B cell (primary cell): ENCODE measurements at regions of chr1 and their contacts with region 1.

Region 1: DNA sequence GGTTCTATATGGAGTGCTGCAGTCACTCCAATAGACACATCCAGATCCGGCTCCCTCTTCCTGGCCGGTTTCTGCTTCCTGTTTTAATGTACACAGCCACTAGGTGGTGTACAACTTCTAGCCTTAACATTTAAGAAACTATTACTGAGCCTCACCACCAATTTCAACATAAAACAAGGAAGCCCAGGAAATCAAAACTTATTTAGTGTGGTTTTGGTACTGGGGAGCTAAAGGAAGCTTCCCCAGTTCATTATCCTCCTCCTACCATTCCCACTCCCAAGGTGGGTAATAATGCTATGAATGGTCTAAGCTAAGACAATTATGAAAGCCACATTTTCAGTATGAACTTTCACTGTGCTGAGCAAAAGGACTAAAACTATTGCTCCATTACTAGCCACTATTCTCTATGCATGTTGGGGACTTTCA is 25.5 kb upstream of the MTMR11 start:
- DNase-seq: peak; percentile 81
- ATAC-seq: peak; percentile 69
- H3K4me3 ChIP-seq: no peak overlapping the region
- H3K4me3 Mint-ChIP-seq: no peak overlapping the region
- H3K27ac ChIP-seq: no peak overlapping the region
- H3K27ac Mint-ChIP-seq: no peak overlapping the region
- H3K4me1 ChIP-seq: peaks cover 7% of the 10 kb centered on the region in 2 donors
- H3K4me1 Mint-ChIP-seq: peaks cover 4% of the 10 kb centered on the region
- H3K27me3 ChIP-seq: peaks cover 0 to 4% (median 0%) of the 10 kb centered on the region in 4 experiments
- H3K27me3 Mint-ChIP-seq: peaks cover 9% of the 10 kb centered on the region
- CTCF ChIP-seq: peak; percentile 90

Region 2: GRCh38 chr1:149903836-149904491 is 58.2 kb before region 1 on chr1:
- CTCF ChIA-PET with region 1: no interaction called
- POLR2A ChIA-PET with region 1: no interaction called
- intact Hi-C with region 1: no loop called
- DNase-seq: no peak
- ATAC-seq: no peak
- H3K4me3 ChIP-seq: no peak overlapping the region
- H3K4me3 Mint-ChIP-seq: no peak overlapping the region
- H3K27ac ChIP-seq: no peak overlapping the region
- H3K27ac Mint-ChIP-seq: no peak overlapping the region
- H3K4me1 ChIP-seq: peaks cover 9 to 12% of the 10 kb centered on the region in 2 donors
- H3K4me1 Mint-ChIP-seq: peaks cover 15% of the 10 kb centered on the region
- H3K27me3 ChIP-seq: no peaks in the 10 kb centered on the region
- H3K27me3 Mint-ChIP-seq: peaks cover 12% of the 10 kb centered on the region
- CTCF ChIP-seq: no peak

Region 3: GRCh38 chr1:150010393-150011115 is 48.4 kb after region 1 on chr1 and contains the start of gene OTUD7B:
- CTCF ChIA-PET with region 1: interaction called, 9 read pairs
- POLR2A ChIA-PET with region 1: no interaction called
- intact Hi-C with region 1: loop called (anchors 5 kb)
- DNase-seq: peak; percentile 75
- ATAC-seq: peak; percentile 87
- H3K4me3 ChIP-seq: peak within 1 kb of the TSS; percentile 0 to 87 (median 82)
- H3K4me3 Mint-ChIP-seq: peak within 1 kb of the TSS; percentile 92
- H3K27ac ChIP-seq: no peak within 1 kb of the TSS
- H3K27ac Mint-ChIP-seq: peak within 1 kb of the TSS; percentile 56
- H3K4me1 ChIP-seq: peaks cover 15 to 16% of the 10 kb centered on the region in 2 donors
- H3K4me1 Mint-ChIP-seq: peaks cover 12% of the 10 kb centered on the region
- H3K27me3 ChIP-seq: peaks cover 3 to 69% (median 49%) of the 10 kb centered on the region in 4 experiments
- H3K27me3 Mint-ChIP-seq: peaks cover 50% of the 10 kb centered on the region
- CTCF ChIP-seq: no peak
- total RNA-seq, gene OTUD7B: 3.3 and 4.1 TPM in 2 replicates

Region 4: DNA sequence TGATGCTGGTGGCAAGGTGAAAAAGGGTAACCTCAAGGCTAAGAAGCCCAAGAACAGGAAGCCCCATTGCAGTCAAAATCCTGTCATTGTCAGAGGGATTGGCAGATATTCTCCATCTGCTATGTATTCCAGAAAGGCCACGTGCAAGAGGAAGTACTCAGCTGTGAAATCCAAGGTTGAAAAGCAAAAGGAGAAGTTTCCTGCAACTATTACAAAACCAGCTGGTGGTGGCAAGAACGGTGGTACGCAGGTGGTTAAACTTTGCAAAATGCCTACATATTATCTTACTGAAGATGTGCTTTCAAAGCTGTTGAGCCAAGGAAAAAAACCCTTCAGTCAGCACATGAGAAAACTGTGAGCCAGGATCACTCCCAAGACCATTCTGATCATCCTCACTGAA is 91.8 kb after region 1 on chr1:
- CTCF ChIA-PET with region 1: interaction called, 67 read pairs
- POLR2A ChIA-PET with region 1: no interaction called
- intact Hi-C with region 1: no loop called
- DNase-seq: no peak
- ATAC-seq: no peak
- H3K4me3 ChIP-seq: no peak overlapping the region
- H3K4me3 Mint-ChIP-seq: peak overlapping the region; percentile 10
- H3K27ac ChIP-seq: no peak overlapping the region
- H3K27ac Mint-ChIP-seq: no peak overlapping the region
- H3K4me1 ChIP-seq: peaks cover 8% of the 10 kb centered on the region in 2 donors
- H3K4me1 Mint-ChIP-seq: peaks cover 20% of the 10 kb centered on the region
- H3K27me3 ChIP-seq: no peaks in the 10 kb centered on the region
- H3K27me3 Mint-ChIP-seq: no peaks in the 10 kb centered on the region
- CTCF ChIP-seq: no peak

Region 5: DNA sequence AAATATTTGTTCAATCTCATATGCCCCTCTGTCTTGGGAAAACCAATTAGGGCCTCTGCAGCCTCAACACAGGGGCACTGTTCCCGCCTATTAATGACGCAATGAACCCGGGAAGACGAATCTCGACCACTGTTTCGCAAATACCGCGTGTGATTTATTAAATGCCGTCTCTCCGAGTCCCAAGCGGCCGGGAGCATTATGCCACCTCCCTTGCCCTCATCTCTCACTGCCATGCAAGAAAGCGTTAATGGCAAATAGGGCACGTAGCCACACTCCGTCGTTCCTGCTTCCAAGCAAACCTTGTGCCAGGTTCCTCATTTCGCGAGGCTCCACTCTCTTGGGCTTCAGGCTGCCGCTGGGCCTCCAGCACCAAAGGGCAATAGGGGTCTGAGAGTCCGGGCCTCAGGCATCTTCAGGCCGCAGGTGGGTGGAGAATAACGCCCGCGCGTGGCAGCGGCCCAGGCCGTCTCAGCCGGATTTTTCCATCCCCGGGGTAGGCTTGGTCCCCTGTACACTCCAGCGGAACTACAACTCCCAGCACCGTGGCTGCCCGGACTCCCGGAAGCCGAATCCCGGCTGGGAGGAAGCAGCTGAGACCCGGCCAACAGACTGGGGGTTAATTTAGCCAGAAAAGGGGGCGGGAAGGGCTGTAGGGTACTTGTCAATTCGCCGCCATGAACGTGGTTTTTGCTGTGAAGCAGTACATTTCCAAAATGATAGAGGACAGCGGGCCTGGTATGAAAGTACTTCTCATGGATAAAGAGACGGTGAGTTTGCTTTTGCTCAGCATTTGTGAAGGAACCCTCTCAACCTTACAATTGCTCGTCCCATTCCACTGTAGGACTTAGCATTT is 105.3 kb after region 1 on chr1 and contains the start of gene VPS45:
- CTCF ChIA-PET with region 1: interaction called, 37 read pairs
- POLR2A ChIA-PET with region 1: no interaction called
- intact Hi-C with region 1: loop called (anchors 1 kb)
- DNase-seq: peak; percentile 88
- ATAC-seq: peak; percentile 88
- H3K4me3 ChIP-seq: peak within 1 kb of the TSS; percentile 61 to 92 (median 79)
- H3K4me3 Mint-ChIP-seq: peak within 1 kb of the TSS; percentile 98
- H3K27ac ChIP-seq: peak within 1 kb of the TSS; percentile 74 to 85
- H3K27ac Mint-ChIP-seq: peak within 1 kb of the TSS; percentile 97
- H3K4me1 ChIP-seq: peaks cover 0 to 15% of the 10 kb centered on the region in 2 donors
- H3K4me1 Mint-ChIP-seq: peaks cover 32% of the 10 kb centered on the region
- H3K27me3 ChIP-seq: no peaks in the 10 kb centered on the region
- H3K27me3 Mint-ChIP-seq: no peaks in the 10 kb centered on the region
- CTCF ChIP-seq: no peak
- total RNA-seq, gene VPS45: 49.1 and 50.0 TPM in 2 replicates

Region 6: DNA sequence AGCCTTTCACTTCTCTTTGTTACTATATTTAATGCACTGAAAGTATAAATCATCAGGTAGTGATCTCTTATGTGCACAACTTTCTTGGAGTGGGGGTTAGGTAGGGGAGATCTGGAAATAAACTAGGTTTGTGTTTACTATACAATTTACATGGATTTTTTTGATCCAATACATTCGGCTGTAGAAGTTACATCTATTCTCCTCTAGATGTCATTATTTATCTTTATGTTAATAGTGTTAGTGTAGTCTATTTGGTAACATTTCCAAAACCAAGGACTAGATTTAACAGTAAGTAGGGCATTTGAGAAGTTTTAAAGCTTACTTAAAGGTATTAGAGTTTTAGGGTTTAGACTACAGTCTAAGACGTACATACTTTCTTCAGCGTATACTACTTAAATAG is 110.8 kb after region 1 on chr1:
- CTCF ChIA-PET with region 1: interaction called, 37 read pairs
- POLR2A ChIA-PET with region 1: interaction called, 4 read pairs
- intact Hi-C with region 1: loop called (anchors 2 kb)
- DNase-seq: peak; percentile 58
- ATAC-seq: peak; percentile 78
- H3K4me3 ChIP-seq: no peak overlapping the region
- H3K4me3 Mint-ChIP-seq: no peak overlapping the region
- H3K27ac ChIP-seq: no peak overlapping the region
- H3K27ac Mint-ChIP-seq: peak overlapping the region; percentile 64
- H3K4me1 ChIP-seq: peaks cover 0 to 14% of the 10 kb centered on the region in 2 donors
- H3K4me1 Mint-ChIP-seq: peaks cover 37% of the 10 kb centered on the region
- H3K27me3 ChIP-seq: no peaks in the 10 kb centered on the region
- H3K27me3 Mint-ChIP-seq: no peaks in the 10 kb centered on the region
- CTCF ChIP-seq: peak; percentile 78

Region 7: GRCh38 chr1:150121236-150121862 is 159.2 kb after region 1 on chr1:
- CTCF ChIA-PET with region 1: no interaction called
- POLR2A ChIA-PET with region 1: no interaction called
- intact Hi-C with region 1: no loop called
- DNase-seq: no peak
- ATAC-seq: no peak
- H3K4me3 ChIP-seq: no peak overlapping the region
- H3K4me3 Mint-ChIP-seq: no peak overlapping the region
- H3K27ac ChIP-seq: peak overlapping the region in 1 of 2 donors; percentile 47
- H3K27ac Mint-ChIP-seq: no peak overlapping the region
- H3K4me1 ChIP-seq: no peaks in the 10 kb centered on the region
- H3K4me1 Mint-ChIP-seq: peaks cover 7% of the 10 kb centered on the region
- H3K27me3 ChIP-seq: no peaks in the 10 kb centered on the region
- H3K27me3 Mint-ChIP-seq: no peaks in the 10 kb centered on the region
- CTCF ChIP-seq: no peak

Region 8: GRCh38 chr1:150168960-150169601 is 206.9 kb after region 1 on chr1:
- CTCF ChIA-PET with region 1: interaction called, 12 read pairs
- POLR2A ChIA-PET with region 1: no interaction called
- intact Hi-C with region 1: loop called (anchors 1 kb)
- DNase-seq: peak; percentile 68
- ATAC-seq: peak; percentile 59
- H3K4me3 ChIP-seq: no peak overlapping the region
- H3K4me3 Mint-ChIP-seq: no peak overlapping the region
- H3K27ac ChIP-seq: no peak overlapping the region
- H3K27ac Mint-ChIP-seq: no peak overlapping the region
- H3K4me1 ChIP-seq: peaks cover 27 to 35% of the 10 kb centered on the region in 2 donors
- H3K4me1 Mint-ChIP-seq: peaks cover 29% of the 10 kb centered on the region
- H3K27me3 ChIP-seq: no peaks in the 10 kb centered on the region
- H3K27me3 Mint-ChIP-seq: no peaks in the 10 kb centered on the region
- CTCF ChIP-seq: peak; percentile 58

Region 9: GRCh38 chr1:150730130-150730721 is 768.1 kb after region 1 on chr1:
- CTCF ChIA-PET with region 1: no interaction called
- POLR2A ChIA-PET with region 1: no interaction called
- intact Hi-C with region 1: no loop called
- DNase-seq: no peak
- ATAC-seq: no peak
- H3K4me3 ChIP-seq: no peak overlapping the region
- H3K4me3 Mint-ChIP-seq: no peak overlapping the region
- H3K27ac ChIP-seq: peak overlapping the region in 1 of 2 donors; percentile 34
- H3K27ac Mint-ChIP-seq: no peak overlapping the region
- H3K4me1 ChIP-seq: no peaks in the 10 kb centered on the region
- H3K4me1 Mint-ChIP-seq: no peaks in the 10 kb centered on the region
- H3K27me3 ChIP-seq: no peaks in the 10 kb centered on the region
- H3K27me3 Mint-ChIP-seq: no peaks in the 10 kb centered on the region
- CTCF ChIP-seq: no peak